Activated CD4-positive, alpha-beta T cell treated with anti-CD3 and anti-CD28 coated beads for 36 hours (primary cell): ENCODE measurements at regions of chr17 and their contacts with region 1.

Region 1: DNA sequence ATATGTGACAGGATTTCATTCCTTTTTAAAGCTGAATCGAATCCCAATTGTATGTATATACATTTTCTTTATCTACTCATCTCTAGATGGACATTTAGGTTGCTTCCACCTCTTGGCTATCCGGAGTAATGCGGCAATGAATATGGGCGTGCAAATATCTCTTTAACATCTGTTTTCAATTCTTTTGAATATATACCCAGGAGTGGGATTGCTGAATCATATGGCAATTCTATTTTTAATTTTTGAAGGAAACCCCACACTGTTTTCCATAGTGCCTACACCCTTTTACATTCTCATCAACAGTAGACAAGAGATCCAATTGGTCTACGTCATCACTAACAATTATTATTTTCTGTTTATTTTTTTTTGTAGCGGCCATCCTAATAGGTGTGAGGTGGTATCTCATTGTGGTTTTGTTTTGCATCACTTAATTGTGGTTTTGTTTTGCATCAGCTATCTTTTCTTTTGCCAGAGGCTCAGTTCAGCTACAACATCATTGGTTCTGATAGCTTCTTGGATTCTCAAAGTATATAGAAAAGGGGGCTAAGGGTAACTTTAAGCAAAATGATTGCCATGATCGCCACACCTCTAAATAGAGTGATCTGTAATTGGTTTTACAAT is 25.6 kb upstream of the MAP2K6 start:
- DNase-seq: no peak
- ATAC-seq: no peak
- H3K4me3 Mint-ChIP-seq: no peak overlapping the region
- H3K27ac Mint-ChIP-seq: no peak overlapping the region
- H3K4me1 Mint-ChIP-seq: no peaks in the 10 kb centered on the region
- H3K27me3 Mint-ChIP-seq: peaks cover 4% of the 10 kb centered on the region

Region 2: GRCh38 chr17:69093279-69093789 is 295.6 kb before region 1 on chr17:
- CTCF ChIA-PET with region 1: no interaction called
- POLR2A ChIA-PET with region 1: no interaction called
- intact Hi-C with region 1: no loop called
- DNase-seq: no peak
- ATAC-seq: no peak
- H3K4me3 Mint-ChIP-seq: no peak overlapping the region
- H3K27ac Mint-ChIP-seq: no peak overlapping the region
- H3K4me1 Mint-ChIP-seq: peaks cover 4% of the 10 kb centered on the region
- H3K27me3 Mint-ChIP-seq: peaks cover 4% of the 10 kb centered on the region

Region 3: DNA sequence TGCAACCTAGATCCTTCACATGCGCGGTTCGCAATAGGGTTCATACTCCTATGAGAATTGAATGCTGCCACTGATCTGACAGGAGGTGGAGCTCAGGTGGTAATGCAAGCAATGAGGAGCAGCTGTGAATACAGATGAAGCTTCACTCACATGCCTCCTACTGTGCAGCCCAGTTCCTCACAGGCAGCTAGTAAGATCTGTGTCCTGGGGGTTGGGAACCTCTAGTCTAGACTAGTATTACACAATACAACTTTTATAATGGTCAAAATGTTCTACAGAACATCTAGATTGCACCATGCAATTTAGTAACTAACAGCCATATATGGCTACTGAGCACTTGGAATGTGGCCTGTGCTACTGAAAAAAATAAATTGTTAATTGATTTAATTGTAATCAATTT is 88.7 kb before region 1 on chr17:
- CTCF ChIA-PET with region 1: no interaction called
- POLR2A ChIA-PET with region 1: no interaction called
- intact Hi-C with region 1: no loop called
- DNase-seq: no peak
- ATAC-seq: no peak
- H3K4me3 Mint-ChIP-seq: no peak overlapping the region
- H3K27ac Mint-ChIP-seq: no peak overlapping the region
- H3K4me1 Mint-ChIP-seq: no peaks in the 10 kb centered on the region
- H3K27me3 Mint-ChIP-seq: no peaks in the 10 kb centered on the region

Region 4: GRCh38 chr17:69335058-69335457 is 53.9 kb before region 1 on chr17:
- CTCF ChIA-PET with region 1: no interaction called
- POLR2A ChIA-PET with region 1: no interaction called
- intact Hi-C with region 1: loop called in 1 of 2 experiments (anchors 2 kb)
- DNase-seq: no peak
- ATAC-seq: peak; percentile 47
- H3K4me3 Mint-ChIP-seq: peak overlapping the region; percentile 21
- H3K27ac Mint-ChIP-seq: no peak overlapping the region
- H3K4me1 Mint-ChIP-seq: peaks cover 10% of the 10 kb centered on the region
- H3K27me3 Mint-ChIP-seq: peaks cover 8% of the 10 kb centered on the region

Region 5: DNA sequence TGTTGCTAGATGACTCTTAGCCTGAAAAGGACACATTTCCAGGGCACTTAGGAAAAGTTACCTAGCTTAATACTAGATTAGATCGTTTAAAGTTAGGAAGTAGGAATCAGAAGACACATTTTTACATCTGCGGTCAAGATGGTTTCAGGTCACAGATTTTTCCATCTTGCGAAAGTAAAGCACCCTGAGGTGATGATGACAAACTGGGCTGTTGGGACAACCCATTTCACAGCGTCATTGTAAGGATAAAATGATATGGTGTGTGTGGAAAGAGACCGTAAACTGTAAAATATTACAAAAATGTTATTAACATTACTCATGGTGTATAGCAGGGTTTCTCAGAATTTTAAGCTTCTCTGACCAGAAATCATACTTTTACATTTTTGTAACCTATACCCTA is 15.4 kb after region 1 on chr17:
- CTCF ChIA-PET with region 1: interaction called, 14 read pairs
- POLR2A ChIA-PET with region 1: no interaction called
- intact Hi-C with region 1: no loop called
- DNase-seq: no peak
- ATAC-seq: no peak
- H3K4me3 Mint-ChIP-seq: no peak overlapping the region
- H3K27ac Mint-ChIP-seq: no peak overlapping the region
- H3K4me1 Mint-ChIP-seq: no peaks in the 10 kb centered on the region
- H3K27me3 Mint-ChIP-seq: peaks cover 3% of the 10 kb centered on the region